ENCODE measurements at regions of chr18 and their contacts with region 1.

Region 1: GRCh38 chr18:56869189-56869777 is 218.1 kb downstream of the WDR7 start:
- DNase-seq: peak; percentile 6
- ATAC-seq: peak; percentile 37
- H3K4me3 Mint-ChIP-seq: no peak overlapping the region
- H3K27ac Mint-ChIP-seq: no peak overlapping the region
- H3K4me1 Mint-ChIP-seq: peaks cover 12% of the 10 kb centered on the region
- H3K27me3 Mint-ChIP-seq: no peaks in the 10 kb centered on the region
- CTCF ChIP-seq: peak; percentile 70

Region 2: DNA sequence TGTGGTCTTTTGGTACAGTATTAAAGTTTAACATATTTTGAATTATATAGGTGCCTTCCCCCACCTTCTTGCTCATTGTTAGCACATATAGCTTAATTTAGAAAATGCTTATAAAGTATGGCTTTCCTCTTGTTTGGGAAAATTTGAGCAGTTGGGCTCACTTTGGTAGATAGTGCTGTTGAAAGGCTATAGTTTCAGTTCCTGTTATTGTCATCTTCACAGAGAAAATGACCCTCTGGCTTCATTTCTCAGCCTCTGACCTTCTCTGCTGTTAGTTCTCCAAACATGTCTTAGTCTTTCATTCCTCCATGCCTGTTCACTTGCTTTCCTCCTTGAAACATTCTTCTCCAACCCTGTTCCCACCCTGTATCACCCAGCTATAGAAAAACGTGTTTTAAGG is 17.5 kb before region 1 on chr18:
- CTCF ChIA-PET with region 1: interaction called, 12 read pairs
- POLR2A ChIA-PET with region 1: no interaction called
- intact Hi-C with region 1: no loop called
- DNase-seq: no peak
- ATAC-seq: no peak
- H3K4me3 Mint-ChIP-seq: no peak overlapping the region
- H3K27ac Mint-ChIP-seq: no peak overlapping the region
- H3K4me1 Mint-ChIP-seq: peaks cover 5% of the 10 kb centered on the region
- H3K27me3 Mint-ChIP-seq: no peaks in the 10 kb centered on the region
- CTCF ChIP-seq: no peak

Region 3: DNA sequence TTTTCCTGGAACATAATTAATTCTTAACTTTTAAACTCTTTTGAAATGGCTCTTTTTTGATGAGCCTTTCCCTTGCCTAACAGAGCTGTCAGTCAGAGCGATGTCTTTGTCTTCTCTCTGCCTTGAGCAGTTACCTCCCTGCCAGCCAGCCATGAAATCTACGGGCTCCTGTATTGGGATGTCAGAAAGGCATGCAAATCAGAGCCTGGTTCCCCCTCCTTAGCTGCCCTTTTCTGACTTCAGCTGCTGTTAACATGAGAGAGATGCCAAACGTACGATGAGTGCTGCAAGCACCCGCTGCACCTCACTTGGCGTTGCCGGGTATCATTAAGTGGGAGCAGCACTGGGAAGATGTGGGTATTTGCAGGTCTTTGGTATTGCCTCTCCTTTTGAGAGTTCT is 146.2 kb after region 1 on chr18:
- CTCF ChIA-PET with region 1: no interaction called
- POLR2A ChIA-PET with region 1: no interaction called
- intact Hi-C with region 1: loop called (anchors 10 kb)
- DNase-seq: no peak
- ATAC-seq: no peak
- H3K4me3 Mint-ChIP-seq: no peak overlapping the region
- H3K27ac Mint-ChIP-seq: no peak overlapping the region
- H3K4me1 Mint-ChIP-seq: peaks cover 23% of the 10 kb centered on the region
- H3K27me3 Mint-ChIP-seq: no peaks in the 10 kb centered on the region
- CTCF ChIP-seq: no peak

Region 4: DNA sequence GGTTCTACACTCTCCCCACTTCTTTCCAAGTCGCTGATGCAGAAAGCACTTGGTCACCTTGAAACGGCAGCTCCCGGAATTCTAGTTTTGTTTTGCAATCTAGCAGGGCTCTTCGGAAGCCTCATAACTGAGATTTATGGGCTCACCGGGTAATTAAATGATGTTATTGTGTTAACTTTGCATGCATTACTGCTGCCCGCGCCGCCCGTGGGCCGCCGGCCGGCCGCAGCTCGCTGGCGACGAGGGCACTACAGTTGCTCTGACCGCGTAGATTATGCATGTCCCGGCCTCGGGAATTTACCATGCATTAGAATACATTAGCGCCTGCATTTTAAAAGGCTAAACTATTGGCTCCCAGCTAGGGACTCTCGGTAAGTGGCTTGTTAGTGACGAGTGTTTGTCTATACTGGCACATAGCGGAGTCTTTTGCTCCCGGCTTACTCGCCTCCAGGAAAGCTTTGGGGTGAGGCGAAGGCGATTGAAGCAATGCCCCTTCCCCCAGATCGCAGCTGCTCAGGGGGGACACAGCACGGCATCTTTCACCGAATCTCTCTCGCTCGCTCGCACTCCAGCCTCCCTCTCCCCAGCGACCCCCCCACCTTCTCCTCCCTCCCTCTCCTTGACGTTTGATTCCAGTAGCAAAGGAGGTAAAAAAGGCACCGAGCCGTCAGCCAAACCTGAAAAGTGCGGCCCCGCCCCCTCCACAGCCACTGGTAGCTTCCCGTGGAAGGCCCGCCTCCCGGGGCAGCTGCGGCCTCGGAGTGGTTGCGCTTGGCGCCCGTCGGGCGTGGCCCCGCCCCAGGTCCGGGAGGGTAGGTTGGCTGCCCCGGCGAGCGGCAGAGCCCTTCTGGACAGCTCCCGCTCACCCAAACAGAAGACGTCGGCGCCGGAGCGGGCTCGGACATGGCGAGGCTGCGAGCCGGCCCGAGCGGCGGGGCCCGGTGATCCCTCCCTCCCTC is 565.5 kb after region 1 on chr18 and contains the start of gene ONECUT2:
- CTCF ChIA-PET with region 1: interaction called, 6 read pairs
- POLR2A ChIA-PET with region 1: no interaction called
- intact Hi-C with region 1: loop called (anchors 10 kb)
- DNase-seq: peak; percentile 79
- ATAC-seq: peak; percentile 85
- H3K4me3 Mint-ChIP-seq: peak within 1 kb of the TSS; percentile 62
- H3K27ac Mint-ChIP-seq: no peak within 1 kb of the TSS
- H3K4me1 Mint-ChIP-seq: peaks cover 45% of the 10 kb centered on the region
- H3K27me3 Mint-ChIP-seq: peaks cover 82% of the 10 kb centered on the region
- CTCF ChIP-seq: no peak
- total RNA-seq, gene ONECUT2: not detected

Region 5: DNA sequence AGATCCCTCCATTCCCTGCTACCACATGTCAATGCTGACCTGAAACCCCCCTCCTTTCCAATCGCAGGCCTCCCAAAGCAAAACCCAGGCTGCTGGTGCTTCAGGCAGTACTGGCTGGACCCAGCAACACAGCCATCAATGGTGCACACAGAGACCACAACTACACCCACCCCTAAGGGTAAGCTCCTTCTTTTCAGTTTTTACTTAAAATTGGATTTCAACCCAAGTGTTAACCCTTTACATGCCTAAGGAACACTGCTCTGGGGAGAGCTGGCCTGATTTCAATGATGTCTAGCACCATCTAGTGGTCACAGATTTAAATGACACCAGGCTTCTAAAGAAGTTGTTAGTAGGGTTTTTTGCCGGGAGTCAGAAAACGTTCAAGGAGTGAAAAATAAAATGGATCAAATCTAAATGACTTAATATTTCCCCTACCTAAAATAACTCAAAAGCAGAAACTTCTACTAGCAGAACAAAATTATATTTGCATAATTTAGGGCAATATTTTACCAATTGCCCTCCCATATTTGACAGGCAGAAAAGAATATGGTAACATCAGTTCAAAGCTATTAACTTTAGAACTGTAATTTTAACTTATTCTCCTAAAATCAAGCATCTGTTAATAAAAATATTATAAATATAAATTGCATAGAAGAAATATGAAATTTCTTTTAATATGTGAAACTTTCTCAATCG is 692.6 kb after region 1 on chr18:
- CTCF ChIA-PET with region 1: interaction called, 12 read pairs
- POLR2A ChIA-PET with region 1: no interaction called
- intact Hi-C with region 1: no loop called
- DNase-seq: peak; percentile 15
- ATAC-seq: peak; percentile 66
- H3K4me3 Mint-ChIP-seq: no peak overlapping the region
- H3K27ac Mint-ChIP-seq: no peak overlapping the region
- H3K4me1 Mint-ChIP-seq: peaks cover 2% of the 10 kb centered on the region
- H3K27me3 Mint-ChIP-seq: no peaks in the 10 kb centered on the region
- CTCF ChIP-seq: peak; percentile 94

Measured in activated CD8-positive, alpha-beta T cell treated with anti-CD3 and anti-CD28 coated beads for 36 hours (primary cell).